ENCODE measurements at regions of chr2 and their contacts with region 1.

Region 1: DNA sequence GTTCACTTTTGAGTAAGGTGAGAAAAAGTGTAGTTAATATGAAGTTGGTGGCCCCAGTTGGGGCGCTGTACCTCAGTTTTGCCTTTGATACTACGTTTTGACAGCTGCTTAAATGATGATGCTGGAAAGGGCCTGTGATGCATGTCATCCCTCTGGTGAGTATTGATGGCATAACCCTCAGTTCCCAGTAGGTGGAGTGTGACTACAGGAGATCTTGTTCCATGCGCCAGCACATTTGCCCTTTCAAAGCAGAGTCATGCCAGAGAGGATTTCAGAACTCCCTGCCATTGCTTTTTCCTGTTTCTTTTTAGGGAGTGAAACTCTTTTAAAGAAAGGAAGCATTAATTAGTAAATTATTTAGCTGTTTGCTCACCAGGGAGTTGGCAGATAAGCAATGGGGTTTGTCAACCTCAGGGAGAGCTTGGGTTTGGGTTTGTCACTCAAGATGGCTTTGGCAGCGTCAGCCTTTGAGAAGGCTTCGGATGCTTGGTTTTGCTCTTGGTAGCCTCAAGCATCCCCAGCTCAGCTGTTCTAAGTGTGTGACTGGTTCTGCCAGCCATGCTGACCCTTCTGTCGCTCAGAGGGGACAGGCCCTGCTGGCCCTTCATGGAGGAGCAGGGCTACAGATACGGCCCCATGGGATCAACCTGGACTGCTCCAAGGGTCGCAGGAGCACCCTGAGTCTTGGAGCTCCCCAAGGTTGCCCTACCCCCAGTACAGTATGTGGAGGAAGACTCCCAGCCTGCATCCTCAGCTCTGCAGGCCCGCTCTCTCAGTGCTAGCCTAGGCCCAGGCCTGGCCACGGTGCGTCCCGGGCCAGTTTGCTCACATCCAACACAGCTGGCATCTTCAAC is 29.1 kb downstream of the ARMC9 start:
- DNase-seq: peak; percentile 33
- H3K4me3 ChIP-seq: no peak overlapping the region
- H3K27ac ChIP-seq: no peak overlapping the region
- H3K27me3 ChIP-seq: no peaks in the 10 kb centered on the region
- CTCF ChIP-seq: peak; percentile 86

Region 2: DNA sequence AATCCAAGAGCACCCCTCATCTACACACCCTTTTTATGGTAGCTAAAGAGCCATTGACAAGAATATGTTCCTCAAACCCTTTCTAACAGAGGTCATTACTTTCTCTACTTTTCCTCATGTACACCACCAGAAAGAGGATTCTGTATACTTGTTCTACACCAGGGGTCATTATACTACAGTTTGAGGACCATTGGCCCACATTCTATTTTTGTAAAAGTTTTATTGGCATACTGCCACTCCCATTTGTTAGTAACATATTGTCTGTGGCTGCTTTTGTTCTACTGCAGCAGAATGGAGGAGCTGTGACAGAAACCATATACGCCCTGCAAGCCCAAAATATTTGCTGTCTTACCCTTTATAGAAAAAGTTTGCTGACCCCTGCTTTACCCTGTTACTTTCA is 117.0 kb before region 1 on chr2:
- CTCF ChIA-PET with region 1: interaction called, 56 read pairs
- POLR2A ChIA-PET with region 1: no interaction called
- DNase-seq: no peak
- H3K4me3 ChIP-seq: no peak overlapping the region
- H3K27ac ChIP-seq: no peak overlapping the region
- H3K27me3 ChIP-seq: no peaks in the 10 kb centered on the region
- CTCF ChIP-seq: peak; percentile 47

Region 3: GRCh38 chr2:231191896-231192872 is 35.4 kb before region 1 on chr2:
- CTCF ChIA-PET with region 1: interaction called, 10 read pairs
- POLR2A ChIA-PET with region 1: no interaction called
- DNase-seq: peak; percentile 79
- H3K4me3 ChIP-seq: no peak overlapping the region
- H3K27ac ChIP-seq: peak overlapping the region; percentile 80
- H3K27me3 ChIP-seq: no peaks in the 10 kb centered on the region
- CTCF ChIP-seq: peak; percentile 87

Region 4: DNA sequence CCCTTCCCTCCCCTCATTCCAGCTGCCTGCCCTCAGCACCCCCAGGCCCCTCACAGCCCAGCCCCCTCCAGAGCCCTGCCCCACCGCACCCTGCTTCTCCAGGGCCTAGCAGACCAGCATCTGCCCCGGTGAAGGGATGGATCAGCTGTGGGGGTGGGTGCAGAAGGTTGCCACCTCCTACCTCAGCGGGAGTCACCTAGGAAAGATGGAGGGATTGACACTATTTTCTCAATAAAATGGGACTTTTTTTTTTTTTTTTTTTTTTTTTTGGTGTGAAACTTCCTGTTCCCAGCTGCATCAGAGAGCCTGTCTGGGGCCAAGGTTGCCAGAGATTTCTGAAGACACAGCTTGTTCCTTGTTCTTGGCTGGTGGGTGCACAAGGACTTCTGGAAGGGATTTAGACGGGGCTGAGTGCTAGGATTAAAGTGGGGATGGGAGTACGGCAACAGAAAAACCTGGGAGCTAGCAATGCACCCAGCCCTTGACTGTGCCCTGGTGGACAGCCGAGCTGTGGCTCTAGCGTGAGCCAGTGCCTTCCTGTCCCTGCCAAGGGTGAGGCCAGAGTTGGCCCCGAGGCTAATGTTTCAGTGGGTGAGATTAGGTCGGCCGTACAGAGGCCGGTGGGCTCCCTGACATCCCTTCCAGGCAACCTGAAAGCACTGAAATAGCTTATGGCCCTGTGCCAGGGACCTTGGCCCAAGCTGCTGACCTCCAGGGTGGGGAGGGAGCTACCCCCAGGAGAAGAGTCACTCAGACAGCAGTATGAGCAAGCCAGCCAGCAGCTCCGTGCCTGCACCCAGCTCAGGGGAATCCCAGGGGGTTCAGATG is 172.5 kb after region 1 on chr2:
- CTCF ChIA-PET with region 1: interaction called, 12 read pairs
- POLR2A ChIA-PET with region 1: no interaction called
- DNase-seq: no peak
- H3K4me3 ChIP-seq: no peak overlapping the region
- H3K27ac ChIP-seq: no peak overlapping the region
- H3K27me3 ChIP-seq: peaks cover 19% of the 10 kb centered on the region
- CTCF ChIP-seq: no peak